Activated T-helper 2 cell treated with anti-CD3 and anti-CD28 coated beads, Interferon-gamma antibody, Interleukin-2, Interleukin-4, amounts not matched to agents 10 μg/mL and 5 μg/mL and 100 μg/mL, durations not matched to agents 14 hours and 24 hours and 36 hours (primary cell): ENCODE measurements at regions of chr7 and their contacts with region 1.

Region 1: GRCh38 chr7:22885797-22886261 is 63.2 kb upstream of the TOMM7 start:
- DNase-seq: peak; percentile 61
- H3K4me3 Mint-ChIP-seq: peak overlapping the region; percentile 65
- H3K27ac Mint-ChIP-seq: peak overlapping the region; percentile 97
- H3K4me1 Mint-ChIP-seq: peaks cover 44% of the 10 kb centered on the region
- H3K27me3 Mint-ChIP-seq: no peaks in the 10 kb centered on the region

Region 2: DNA sequence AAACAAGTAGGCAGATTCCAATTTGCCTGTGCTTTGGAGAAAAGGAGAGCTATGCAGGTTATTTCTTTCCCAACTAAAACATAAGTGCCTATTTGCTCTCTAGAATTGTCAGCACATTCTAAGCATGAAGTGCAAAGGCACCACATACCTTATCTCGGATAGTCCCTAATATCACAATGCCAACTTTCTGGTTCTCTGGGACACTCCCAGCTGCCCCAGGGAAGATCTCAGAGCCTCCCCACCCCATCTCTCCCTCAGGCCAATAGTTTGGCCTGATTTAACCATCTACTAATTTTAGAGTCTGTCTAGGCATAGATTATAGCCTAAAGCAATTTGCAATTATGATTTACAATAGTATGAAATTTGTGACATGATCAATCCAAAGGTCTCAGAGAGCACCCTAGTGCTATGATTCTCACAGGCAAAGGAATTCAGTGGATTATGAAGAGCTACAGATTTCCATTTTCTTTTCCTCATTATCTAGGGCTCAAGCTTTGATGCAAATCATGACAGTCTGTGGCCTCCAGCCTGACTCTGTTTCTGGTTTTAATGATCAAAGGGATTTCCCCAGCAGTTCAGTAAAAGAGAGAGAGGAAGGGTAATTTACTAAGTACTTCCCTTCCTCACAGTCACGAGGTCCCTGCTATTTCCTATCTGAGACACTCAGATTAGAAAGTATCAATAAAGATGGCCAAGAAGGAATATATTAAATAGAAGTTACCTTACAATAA is 187.8 kb before region 1 on chr7:
- intact Hi-C with region 1: loop called (anchors 10 kb)
- DNase-seq: no peak
- H3K4me3 Mint-ChIP-seq: no peak overlapping the region
- H3K27ac Mint-ChIP-seq: peak overlapping the region; percentile 56
- H3K4me1 Mint-ChIP-seq: peaks cover 78% of the 10 kb centered on the region
- H3K27me3 Mint-ChIP-seq: peaks cover 7% of the 10 kb centered on the region

Region 3: DNA sequence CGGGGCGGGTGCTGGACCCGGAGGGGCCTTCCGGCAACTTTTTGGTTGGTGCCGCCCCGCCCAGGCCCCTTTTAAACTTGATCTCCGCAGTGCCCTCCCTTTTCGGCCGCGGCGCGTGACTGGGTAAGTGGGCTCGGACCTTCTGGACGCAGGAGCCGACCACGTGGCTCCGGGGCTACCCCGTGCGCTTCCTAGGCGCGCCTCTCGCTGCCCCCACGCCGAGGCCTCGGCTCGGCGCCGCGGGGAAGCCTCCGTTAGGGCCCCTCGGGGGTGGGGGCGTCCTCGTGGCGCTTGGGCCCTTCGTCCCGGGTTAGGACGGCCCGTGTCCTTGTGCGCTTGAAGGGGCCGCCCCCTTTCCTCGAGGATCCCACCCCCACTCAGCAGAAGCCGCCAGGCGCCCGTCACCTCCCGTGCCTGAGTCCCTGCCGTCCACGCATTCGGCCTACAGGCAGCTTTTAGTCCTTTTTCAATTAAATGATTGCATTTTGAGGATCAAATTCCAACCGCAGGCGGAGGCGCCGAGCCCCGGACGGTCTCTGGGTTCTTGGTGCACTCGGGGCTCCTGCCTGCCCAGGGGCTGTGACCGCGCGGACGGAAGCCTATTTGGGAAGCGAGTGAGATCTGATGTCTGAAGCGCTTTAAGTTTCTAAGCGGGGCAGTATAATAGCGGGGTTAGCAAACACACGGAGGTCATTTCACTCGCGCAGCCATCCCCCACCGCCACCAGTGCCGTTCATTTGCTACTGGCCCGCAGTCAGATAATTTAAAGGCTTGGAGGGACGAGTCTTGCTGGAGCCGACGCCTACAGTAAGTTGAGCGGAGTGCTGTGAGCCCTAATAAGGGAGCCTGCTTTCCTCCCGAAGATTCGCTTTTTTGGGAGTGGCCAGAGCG is 31.4 kb before region 1 on chr7:
- intact Hi-C with region 1: loop called (anchors 1 kb)
- DNase-seq: peak; percentile 74
- H3K4me3 Mint-ChIP-seq: peak overlapping the region; percentile 95
- H3K27ac Mint-ChIP-seq: peak overlapping the region; percentile 94
- H3K4me1 Mint-ChIP-seq: peaks cover 31% of the 10 kb centered on the region
- H3K27me3 Mint-ChIP-seq: no peaks in the 10 kb centered on the region

Region 4: DNA sequence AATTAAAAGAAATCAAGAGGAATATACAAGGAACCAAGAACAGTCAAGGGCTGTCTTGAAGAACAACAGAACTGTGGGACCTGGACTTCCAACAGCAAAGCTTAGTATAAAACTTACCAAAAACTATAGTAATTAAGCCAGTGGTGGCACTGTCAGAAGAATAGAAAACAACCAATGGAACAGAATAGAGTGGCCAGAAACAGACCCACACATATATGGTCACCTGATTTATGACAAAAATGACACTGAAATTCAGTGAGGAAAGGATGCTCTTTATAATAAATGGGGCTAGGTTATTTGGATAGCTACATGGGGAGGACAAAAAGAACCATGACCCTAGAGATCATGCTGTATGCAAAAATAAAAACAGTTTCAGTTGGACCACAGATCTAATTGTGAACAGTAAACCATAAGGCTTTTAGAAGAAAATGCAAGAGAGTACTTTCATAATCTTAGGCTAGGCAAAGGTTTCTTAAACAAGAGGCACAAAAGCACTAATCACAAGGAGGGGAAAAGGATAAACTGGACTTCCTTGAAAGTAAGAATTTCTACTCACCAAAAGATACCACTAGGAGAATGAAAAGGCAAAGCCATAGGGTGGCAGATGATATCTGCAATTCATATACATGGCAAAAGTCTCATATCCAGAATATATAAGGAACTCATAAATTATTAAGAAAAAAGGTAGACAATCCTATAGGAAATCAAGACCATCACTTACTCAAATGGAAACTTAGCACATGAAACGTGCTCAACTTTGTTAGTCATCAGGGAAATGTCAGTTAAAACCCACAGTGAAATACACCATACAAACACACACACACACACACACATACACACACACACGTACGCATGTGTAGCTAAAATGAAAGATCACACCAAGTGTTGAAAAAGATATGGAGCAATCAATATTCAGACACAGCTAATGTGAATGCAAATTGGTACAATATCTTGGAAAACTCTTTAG is 107.3 kb after region 1 on chr7:
- intact Hi-C with region 1: loop called (anchors 1 kb)
- DNase-seq: no peak
- H3K4me3 Mint-ChIP-seq: peak overlapping the region; percentile 9
- H3K27ac Mint-ChIP-seq: peak overlapping the region; percentile 84
- H3K4me1 Mint-ChIP-seq: peaks cover 63% of the 10 kb centered on the region
- H3K27me3 Mint-ChIP-seq: no peaks in the 10 kb centered on the region